ENCODE measurements at regions of chr5 and their contacts with region 1.

Region 1: GRCh38 chr5:127757576-127757975 is 54.4 kb downstream of the CCDC192 start:
- DNase-seq: peak in 1 of 9 donors; percentile 13
- ATAC-seq: peak; percentile 64
- H3K4me3 ChIP-seq: no peak overlapping the region
- H3K4me3 Mint-ChIP-seq: no peak overlapping the region
- H3K27ac ChIP-seq: no peak overlapping the region
- H3K27ac Mint-ChIP-seq: peak overlapping the region in 1 of 9 donors; percentile 2
- H3K4me1 ChIP-seq: no peaks in the 10 kb centered on the region
- H3K4me1 Mint-ChIP-seq: peaks cover 0 to 3% (median 0%) of the 10 kb centered on the region in 7 donors
- H3K27me3 ChIP-seq: no peaks in the 10 kb centered on the region
- H3K27me3 Mint-ChIP-seq: peaks cover 0 to 15% (median 0%) of the 10 kb centered on the region in 5 donors

Region 2: GRCh38 chr5:127785098-127785927 is 27.7 kb after region 1 on chr5:
- CTCF ChIA-PET with region 1: no interaction called
- POLR2A ChIA-PET with region 1: no interaction called
- intact Hi-C with region 1: loop called in 1 of 2 experiments (anchors 2 kb)
- DNase-seq: peak in 1 of 9 donors; percentile 34
- ATAC-seq: peak; percentile 79
- H3K4me3 ChIP-seq: no peak overlapping the region
- H3K4me3 Mint-ChIP-seq: peak overlapping the region in 1 of 10 donors; percentile 73
- H3K27ac ChIP-seq: no peak overlapping the region
- H3K27ac Mint-ChIP-seq: peak overlapping the region in 1 of 9 donors; percentile 96
- H3K4me1 ChIP-seq: peaks cover 0 to 4% of the 10 kb centered on the region in 2 donors
- H3K4me1 Mint-ChIP-seq: peaks cover 0 to 45% (median 0%) of the 10 kb centered on the region in 7 donors
- H3K27me3 ChIP-seq: no peaks in the 10 kb centered on the region
- H3K27me3 Mint-ChIP-seq: peaks cover 3 to 24% (median 16%) of the 10 kb centered on the region in 5 donors

Measured in naive thymus-derived CD4-positive, alpha-beta T cell (primary cell).